Astrocyte of the spinal cord (primary cell): ENCODE measurements at regions of chr4 and their contacts with region 1.

Region 1: GRCh38 chr4:183261953-183262775 is 57.9 kb downstream of the CLDN22 start:
- DNase-seq: peak; percentile 76
- H3K4me3 ChIP-seq: no peak overlapping the region
- CTCF ChIP-seq: peak; percentile 91

Region 2: DNA sequence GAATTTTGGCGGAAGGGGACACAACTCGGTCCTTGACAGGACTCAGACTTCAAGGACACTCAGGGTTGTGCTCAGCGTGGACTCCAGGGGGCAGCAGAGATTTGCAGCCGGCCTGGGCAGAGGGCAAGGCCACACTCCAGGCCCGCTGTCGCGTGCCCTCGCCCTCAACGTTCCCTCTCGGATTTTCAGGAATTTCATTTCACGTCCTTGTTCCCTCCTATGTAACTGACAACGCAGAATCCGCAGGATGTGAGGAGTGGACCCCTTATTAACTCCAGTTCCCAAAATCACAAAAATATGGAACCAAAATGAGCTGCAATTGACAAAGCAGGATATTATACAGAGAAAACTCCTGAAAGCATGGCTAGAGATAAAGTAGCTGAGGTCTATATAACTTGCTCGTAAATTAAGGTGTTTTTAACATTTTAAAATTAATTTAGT is 323.9 kb before region 1 on chr4:
- in situ Hi-C with region 1: loop called (anchors 25 kb)
- DNase-seq: peak; percentile 60
- H3K4me3 ChIP-seq: no peak overlapping the region
- CTCF ChIP-seq: peak; percentile 97

Region 3: GRCh38 chr4:183588169-183588675 is 326.1 kb after region 1 on chr4:
- in situ Hi-C with region 1: no loop called
- DNase-seq: no peak
- H3K4me3 ChIP-seq: no peak overlapping the region
- CTCF ChIP-seq: no peak

Region 4: DNA sequence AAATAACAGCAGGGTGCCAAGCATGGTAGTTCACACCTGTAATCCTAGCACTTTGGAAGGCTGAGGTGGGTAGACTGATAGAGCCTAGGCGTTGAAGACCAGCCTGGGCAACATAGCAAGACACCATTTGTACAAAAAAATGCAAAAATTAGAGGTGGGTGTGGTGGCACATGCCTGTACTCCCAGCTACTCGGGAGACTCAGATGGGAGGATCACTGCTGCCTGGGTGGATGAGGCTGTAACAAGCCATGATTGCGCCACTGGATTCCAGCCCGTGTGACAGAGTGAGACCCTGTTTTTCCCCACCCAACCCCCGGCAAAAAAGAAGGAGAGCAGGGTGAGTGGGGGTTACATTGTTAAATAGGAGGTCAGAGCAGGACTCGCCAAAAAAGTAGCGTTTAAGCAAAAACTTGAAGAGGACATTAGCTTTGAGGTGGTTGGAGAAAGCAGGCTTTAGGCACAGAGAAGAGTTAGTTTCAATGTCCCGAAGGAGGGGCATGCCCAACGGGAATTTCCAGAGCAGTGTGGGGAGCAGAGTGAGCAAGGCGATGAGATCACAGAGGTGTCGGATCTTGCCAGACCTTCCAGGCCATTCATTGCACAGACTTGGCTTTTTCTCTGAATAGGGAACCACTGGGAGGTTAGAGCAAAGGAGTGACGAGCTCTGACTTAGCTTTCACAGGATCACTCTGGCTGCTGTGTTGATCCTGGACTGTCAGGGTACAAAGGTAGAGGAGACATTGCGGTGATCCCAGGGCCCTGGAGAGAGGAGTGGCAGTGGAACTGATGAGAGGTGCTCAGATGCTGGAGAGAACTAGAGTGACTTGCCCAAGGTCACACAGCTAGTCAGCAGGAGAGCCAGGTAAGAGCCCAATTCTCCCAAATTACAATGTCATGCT is 467.5 kb after region 1 on chr4:
- in situ Hi-C with region 1: no loop called
- DNase-seq: no peak
- H3K4me3 ChIP-seq: no peak overlapping the region
- CTCF ChIP-seq: no peak